Activated T-helper 1 cell treated with anti-CD3 and anti-CD28 coated beads, Interleukin-12 subunit alpha, Interleukin-12 subunit beta, Interleukin-2, Interleukin-4 antibody, amounts not matched to agents 30 ng/mL and 10 ng/mL and 1 ng/mL, durations not matched to agents 14 hours and 24 hours and 36 hours (primary cell): ENCODE measurements at regions of chr6 and their contacts with region 1.

Region 1: GRCh38 chr6:134174672-134175198 is 122.3 kb upstream of the SLC2A12 start:
- DNase-seq: peak; percentile 89
- H3K4me3 Mint-ChIP-seq: peak overlapping the region; percentile 96
- H3K27ac Mint-ChIP-seq: peak overlapping the region; percentile 98
- H3K4me1 Mint-ChIP-seq: peaks cover 78% of the 10 kb centered on the region
- H3K27me3 Mint-ChIP-seq: no peaks in the 10 kb centered on the region

Region 2: DNA sequence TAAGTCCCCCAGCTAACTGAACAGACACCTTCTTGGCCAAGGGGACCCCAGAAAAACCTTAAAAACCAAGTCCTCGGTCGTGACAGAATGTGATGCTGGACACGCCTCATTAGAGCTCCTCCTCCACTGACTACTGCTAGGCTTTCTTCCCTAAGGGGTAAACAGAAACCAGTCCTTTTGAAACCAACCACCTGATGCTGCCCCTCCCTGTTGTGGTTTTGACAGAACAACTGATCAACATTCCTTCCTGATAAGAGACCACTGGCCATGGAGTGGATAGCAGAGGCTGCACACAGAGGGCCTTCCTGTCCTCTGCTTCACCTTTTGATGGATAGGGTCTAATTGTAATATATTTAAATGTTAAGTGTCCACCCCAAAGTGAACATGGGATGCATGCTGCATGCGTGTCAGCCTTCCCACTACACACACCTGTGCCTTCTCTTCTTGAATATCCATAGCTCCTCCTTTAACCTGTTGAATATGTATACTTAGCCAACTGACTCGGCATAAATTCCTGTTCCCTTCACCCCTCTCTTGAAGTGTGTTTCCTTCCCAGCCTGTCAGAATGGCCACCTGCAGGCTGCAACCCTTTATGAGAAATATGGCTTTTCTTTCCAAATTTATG is 94.5 kb before region 1 on chr6:
- intact Hi-C with region 1: no loop called
- DNase-seq: no peak
- H3K4me3 Mint-ChIP-seq: no peak overlapping the region
- H3K27ac Mint-ChIP-seq: no peak overlapping the region
- H3K4me1 Mint-ChIP-seq: peaks cover 28% of the 10 kb centered on the region
- H3K27me3 Mint-ChIP-seq: peaks cover 9% of the 10 kb centered on the region

Region 3: DNA sequence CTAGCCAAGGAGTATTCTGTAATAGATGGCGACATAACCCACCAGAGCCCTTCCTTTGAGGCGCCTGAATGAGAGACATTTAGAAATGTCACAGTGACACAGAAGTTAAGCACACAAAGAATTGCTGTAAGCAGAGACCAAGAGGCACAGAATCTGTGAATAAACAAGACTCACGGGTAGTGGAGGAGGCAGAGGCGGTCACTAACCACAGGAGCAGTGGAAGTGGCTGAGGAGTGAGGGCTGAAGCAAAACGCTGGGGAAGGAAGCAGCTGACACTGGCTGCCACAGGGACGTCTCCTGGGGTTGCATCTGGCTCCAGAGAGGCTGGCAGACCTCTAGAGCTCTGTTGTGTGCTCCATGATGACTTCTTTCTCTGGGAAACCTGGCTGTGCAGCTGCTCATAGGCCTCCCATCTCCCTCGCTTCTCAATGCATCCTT is 57.3 kb before region 1 on chr6:
- intact Hi-C with region 1: no loop called
- DNase-seq: no peak
- H3K4me3 Mint-ChIP-seq: no peak overlapping the region
- H3K27ac Mint-ChIP-seq: no peak overlapping the region
- H3K4me1 Mint-ChIP-seq: peaks cover 13% of the 10 kb centered on the region
- H3K27me3 Mint-ChIP-seq: peaks cover 6% of the 10 kb centered on the region

Region 4: GRCh38 chr6:134235937-134236751 is 61.4 kb after region 1 on chr6:
- intact Hi-C with region 1: loop called (anchors 1 kb)
- DNase-seq: no peak
- H3K4me3 Mint-ChIP-seq: peak overlapping the region; percentile 17
- H3K27ac Mint-ChIP-seq: peak overlapping the region; percentile 85
- H3K4me1 Mint-ChIP-seq: peaks cover 52% of the 10 kb centered on the region
- H3K27me3 Mint-ChIP-seq: no peaks in the 10 kb centered on the region

Region 5: DNA sequence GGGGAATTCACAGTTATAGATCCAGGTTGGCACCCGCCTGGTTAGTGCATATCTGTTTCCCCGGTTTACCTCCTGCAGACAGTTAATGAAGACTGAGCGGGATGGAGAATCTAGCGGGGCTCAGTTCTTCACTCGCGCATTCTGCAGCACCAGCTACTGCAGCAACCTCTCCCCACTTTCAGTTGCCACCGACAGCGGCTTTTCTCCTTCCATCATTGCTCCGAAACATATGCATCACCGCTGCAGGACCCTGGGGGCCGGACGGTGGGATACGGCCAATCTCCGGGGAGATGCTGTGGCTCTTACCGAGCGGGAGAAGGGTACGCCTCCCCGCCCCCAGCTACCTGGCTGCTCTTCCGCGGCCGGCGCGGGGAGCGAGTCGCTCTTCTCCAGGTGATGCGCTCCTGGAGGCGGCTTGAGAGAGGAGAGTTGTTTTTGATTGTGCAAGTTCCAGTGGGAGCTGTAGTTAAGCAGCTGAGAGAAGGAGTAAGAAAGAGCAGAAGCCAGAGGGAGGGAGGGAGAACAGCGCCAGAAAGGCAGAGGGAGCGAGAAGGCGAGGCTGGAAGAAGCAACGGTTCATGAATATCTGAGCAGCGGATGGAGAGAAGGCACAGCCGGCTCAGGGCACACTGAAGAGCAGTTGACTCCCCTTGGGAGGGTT is 142.9 kb after region 1 on chr6 and contains the start of gene SGK1:
- intact Hi-C with region 1: loop called (anchors 2 kb)
- DNase-seq: peak; percentile 3
- H3K4me3 Mint-ChIP-seq: peak within 1 kb of the TSS; percentile 91
- H3K27ac Mint-ChIP-seq: peak within 1 kb of the TSS; percentile 57
- H3K4me1 Mint-ChIP-seq: peaks cover 39% of the 10 kb centered on the region
- H3K27me3 Mint-ChIP-seq: peaks cover 16% of the 10 kb centered on the region
- total RNA-seq, gene SGK1: 48.7 and 50.2 TPM in 2 replicates

Region 6: GRCh38 chr6:134436281-134436815 is 261.6 kb after region 1 on chr6:
- intact Hi-C with region 1: loop called (anchors 1 kb)
- DNase-seq: peak; percentile 74
- H3K4me3 Mint-ChIP-seq: peak overlapping the region; percentile 55
- H3K27ac Mint-ChIP-seq: peak overlapping the region; percentile 99
- H3K4me1 Mint-ChIP-seq: peaks cover 41% of the 10 kb centered on the region
- H3K27me3 Mint-ChIP-seq: no peaks in the 10 kb centered on the region

Region 7: DNA sequence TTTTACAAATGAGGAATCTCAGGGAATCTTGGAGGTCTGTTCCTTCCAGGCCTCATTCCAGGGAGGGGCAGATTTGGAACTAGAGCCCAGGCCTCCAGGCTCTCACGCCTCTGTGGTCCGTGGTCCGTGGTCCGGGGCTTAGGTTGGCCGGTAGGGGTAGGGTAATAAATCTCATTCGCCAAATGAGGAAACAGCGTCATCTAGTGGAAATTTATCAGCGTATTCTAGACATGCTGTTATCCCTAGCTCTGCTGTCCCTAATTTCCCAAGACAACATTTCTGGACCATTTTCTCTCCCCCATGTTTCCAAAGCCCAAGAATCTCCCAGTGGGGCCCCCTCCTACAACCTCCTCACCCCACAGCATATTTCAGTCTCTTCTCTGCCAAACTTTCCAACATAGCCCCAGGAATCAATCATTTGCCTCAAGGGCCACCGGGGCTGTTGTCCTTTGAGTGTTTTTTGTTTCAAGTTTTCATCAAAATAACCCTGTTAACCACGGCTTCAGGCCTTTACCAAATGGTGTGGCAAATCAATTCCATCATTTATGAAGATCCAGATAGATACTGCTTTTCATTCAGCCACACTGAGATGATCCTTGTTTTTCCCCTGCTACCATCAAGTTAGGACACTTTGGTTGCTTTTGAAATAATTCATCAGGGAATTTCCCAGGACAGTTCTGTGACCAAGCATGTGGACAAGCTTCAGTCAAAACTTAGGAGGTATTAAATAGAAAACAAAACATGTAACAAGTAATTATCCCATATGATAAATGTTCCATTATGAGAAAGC is 648.4 kb after region 1 on chr6:
- intact Hi-C with region 1: loop called (anchors 1 kb)
- DNase-seq: peak; percentile 1
- H3K4me3 Mint-ChIP-seq: no peak overlapping the region
- H3K27ac Mint-ChIP-seq: no peak overlapping the region
- H3K4me1 Mint-ChIP-seq: no peaks in the 10 kb centered on the region
- H3K27me3 Mint-ChIP-seq: peaks cover 2% of the 10 kb centered on the region

Region 8: DNA sequence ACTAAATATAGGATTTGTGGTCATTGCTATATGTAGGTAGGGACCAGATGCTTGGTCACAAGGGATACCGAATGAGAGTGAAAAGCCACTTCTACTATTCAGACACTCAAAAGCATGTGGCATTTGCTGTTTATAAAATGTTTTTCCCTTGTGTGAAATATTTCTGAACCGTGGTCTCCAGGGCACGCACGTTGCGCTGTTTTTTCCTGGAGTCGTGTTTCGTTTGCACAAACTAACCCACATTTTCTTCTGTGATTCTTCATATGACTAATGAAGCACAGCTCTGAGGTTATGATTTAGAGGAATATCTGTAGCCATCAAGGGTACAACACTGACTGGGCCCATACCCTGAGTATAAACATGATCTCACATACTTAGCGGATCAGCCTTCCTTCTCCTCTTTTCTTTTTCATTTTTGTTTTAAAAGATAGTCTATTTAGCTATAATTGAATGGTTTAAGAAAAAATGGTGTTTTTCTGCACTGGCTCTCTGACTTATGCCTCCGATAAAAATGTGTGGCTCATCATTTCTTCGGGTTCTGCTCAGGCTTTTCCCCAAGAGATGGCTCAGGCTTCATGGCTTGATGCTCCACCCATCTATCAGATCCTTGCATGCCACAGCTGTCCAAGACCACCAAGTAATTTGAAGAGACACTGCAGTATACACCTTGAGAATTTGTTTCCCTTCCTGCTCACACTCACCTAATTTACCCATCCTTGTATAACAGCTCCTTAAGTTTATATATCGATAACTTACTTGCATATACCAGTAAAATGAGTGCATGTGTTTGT is 939.8 kb after region 1 on chr6:
- intact Hi-C with region 1: loop called (anchors 10 kb)
- DNase-seq: peak; percentile 53
- H3K4me3 Mint-ChIP-seq: peak overlapping the region; percentile 66
- H3K27ac Mint-ChIP-seq: peak overlapping the region; percentile 97
- H3K4me1 Mint-ChIP-seq: peaks cover 88% of the 10 kb centered on the region
- H3K27me3 Mint-ChIP-seq: no peaks in the 10 kb centered on the region

Region 9: GRCh38 chr6:136067731-136068341 is 1893.1 kb after region 1 on chr6:
- intact Hi-C with region 1: no loop called
- DNase-seq: no peak
- H3K4me3 Mint-ChIP-seq: no peak overlapping the region
- H3K27ac Mint-ChIP-seq: no peak overlapping the region
- H3K4me1 Mint-ChIP-seq: no peaks in the 10 kb centered on the region
- H3K27me3 Mint-ChIP-seq: peaks cover 2% of the 10 kb centered on the region